Caco-2 (cell line): ENCODE measurements at regions of chr6 and their contacts with region 1.

Region 1: DNA sequence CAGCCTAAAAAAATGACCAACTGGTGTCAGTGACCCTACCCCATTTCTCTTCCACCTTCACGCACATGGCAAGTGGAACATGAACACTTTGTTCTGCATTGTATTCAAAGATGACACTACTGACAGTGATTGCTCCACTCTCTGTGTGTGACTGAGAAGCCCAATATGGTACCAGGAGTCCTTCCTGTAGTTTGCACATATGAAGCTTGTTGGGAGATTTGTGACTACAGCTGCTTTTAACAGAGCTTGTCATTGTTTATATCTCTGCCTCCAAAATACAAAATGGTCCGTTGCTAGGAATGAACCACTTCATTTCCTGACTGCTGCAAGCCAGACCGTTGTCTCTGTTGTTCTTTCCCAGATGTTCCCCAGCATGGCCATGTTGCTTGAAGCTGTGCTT is 140.3 kb upstream of the TCF21 start:
- DNase-seq: no peak
- H3K4me3 ChIP-seq: no peak overlapping the region
- H3K4me3 Mint-ChIP-seq: no peak overlapping the region
- H3K27ac Mint-ChIP-seq: no peak overlapping the region
- H3K4me1 ChIP-seq: no peaks in the 10 kb centered on the region
- H3K4me1 Mint-ChIP-seq: no peaks in the 10 kb centered on the region
- H3K27me3 ChIP-seq: no peaks in the 10 kb centered on the region
- H3K27me3 Mint-ChIP-seq: peaks cover 5% of the 10 kb centered on the region
- CTCF ChIP-seq: no peak

Region 2: DNA sequence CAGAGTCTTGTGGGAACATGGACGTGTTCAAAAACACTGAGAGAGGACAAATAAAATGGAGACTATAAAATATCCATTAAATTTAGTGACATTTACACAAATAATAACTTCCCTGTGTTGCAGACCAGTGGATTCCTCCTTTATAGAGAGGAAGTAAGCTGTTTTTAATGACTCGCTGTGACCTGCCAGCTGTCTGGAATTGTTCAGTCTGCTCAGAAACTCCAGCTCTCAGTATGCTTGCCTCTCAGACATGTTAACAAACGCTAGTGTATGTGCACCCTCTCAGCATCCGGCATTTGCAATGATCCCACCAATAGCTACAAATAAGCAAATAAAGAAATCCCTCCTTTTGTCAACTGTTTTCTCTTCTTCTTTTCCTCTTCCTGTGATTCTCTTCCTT is 17.7 kb before region 1 on chr6:
- CTCF ChIA-PET with region 1: no interaction called
- POLR2A ChIA-PET with region 1: no interaction called
- intact Hi-C with region 1: loop called (anchors 2 kb)
- DNase-seq: no peak
- H3K4me3 ChIP-seq: no peak overlapping the region
- H3K4me3 Mint-ChIP-seq: no peak overlapping the region
- H3K27ac Mint-ChIP-seq: no peak overlapping the region
- H3K4me1 ChIP-seq: no peaks in the 10 kb centered on the region
- H3K4me1 Mint-ChIP-seq: no peaks in the 10 kb centered on the region
- H3K27me3 ChIP-seq: no peaks in the 10 kb centered on the region
- H3K27me3 Mint-ChIP-seq: no peaks in the 10 kb centered on the region
- CTCF ChIP-seq: no peak